Naive thymus-derived CD4-positive, alpha-beta T cell (primary cell): ENCODE measurements at regions of chr17 and their contacts with region 1.

Region 1: DNA sequence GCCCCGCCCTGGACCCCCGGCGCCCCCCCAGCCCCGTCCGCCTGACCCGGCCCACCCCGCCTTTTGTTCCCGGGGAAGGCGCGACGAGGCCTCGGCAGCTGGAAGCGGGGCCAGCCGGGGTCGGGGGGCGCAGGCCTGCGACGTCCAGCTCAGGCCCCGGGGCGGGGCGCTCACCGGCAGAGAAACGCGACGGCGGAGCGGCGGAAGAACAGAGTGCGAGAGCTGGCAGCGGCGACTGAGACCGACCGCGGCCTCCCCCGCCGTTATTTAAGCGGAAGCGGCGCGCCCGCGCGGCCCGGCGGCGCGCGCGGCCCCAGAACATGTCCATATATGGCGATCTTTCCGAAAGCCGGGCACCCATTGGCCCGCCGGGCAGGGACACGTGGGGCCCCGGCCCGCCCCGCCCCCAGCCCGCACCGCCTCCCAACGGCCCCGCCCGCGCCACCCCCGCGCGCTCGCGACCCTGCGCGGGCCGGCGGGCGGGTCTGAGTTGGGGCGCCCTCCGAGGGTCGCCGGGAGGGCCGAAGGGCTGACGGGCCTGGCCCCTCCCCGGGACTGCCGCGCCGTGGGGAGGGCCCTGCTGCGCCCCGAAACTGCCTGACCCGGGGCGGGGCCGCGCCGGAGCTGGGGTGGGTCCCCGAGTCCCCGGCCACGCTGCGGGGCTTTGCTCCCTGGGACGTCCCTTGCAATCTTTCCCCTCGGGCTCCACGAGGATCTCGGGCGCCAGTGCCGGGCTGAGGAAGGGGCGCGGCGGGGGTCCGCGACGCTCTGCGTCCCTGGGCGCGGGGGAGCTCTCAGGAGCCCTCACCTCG is at the start of gene ACTG1:
- DNase-seq: peak; percentile 87 to 93 (median 92)
- ATAC-seq: peak; percentile 87
- H3K4me3 ChIP-seq: peak within 1 kb of the TSS; percentile 77
- H3K4me3 Mint-ChIP-seq: peak within 1 kb of the TSS; percentile 91 to 100 (median 98)
- H3K27ac ChIP-seq: peak within 1 kb of the TSS; percentile 79
- H3K27ac Mint-ChIP-seq: peak within 1 kb of the TSS; percentile 92 to 99 (median 95)
- H3K4me1 ChIP-seq: peaks cover 12 to 31% of the 10 kb centered on the region in 2 donors
- H3K4me1 Mint-ChIP-seq: peaks cover 23 to 53% (median 47%) of the 10 kb centered on the region in 7 donors
- H3K27me3 ChIP-seq: no peaks in the 10 kb centered on the region
- H3K27me3 Mint-ChIP-seq: peaks cover 0 to 7% (median 0%) of the 10 kb centered on the region in 5 donors
- total RNA-seq, gene ACTG1: 971 to 4,639 (median 1,185) TPM

Region 2: GRCh38 chr17:81346090-81346907 is 166.5 kb before region 1 on chr17:
- CTCF ChIA-PET with region 1: no interaction called
- POLR2A ChIA-PET with region 1: no interaction called
- intact Hi-C with region 1: loop called in 1 of 2 experiments (anchors 2 kb)
- DNase-seq: peak; percentile 88 to 94 (median 92)
- ATAC-seq: peak; percentile 97
- H3K4me3 ChIP-seq: peak overlapping the region; percentile 44
- H3K4me3 Mint-ChIP-seq: peak overlapping the region; percentile 16 to 74 (median 58)
- H3K27ac ChIP-seq: no peak overlapping the region
- H3K27ac Mint-ChIP-seq: no peak overlapping the region
- H3K4me1 ChIP-seq: peaks cover 17 to 31% of the 10 kb centered on the region in 2 donors
- H3K4me1 Mint-ChIP-seq: peaks cover 10 to 29% (median 16%) of the 10 kb centered on the region in 7 donors
- H3K27me3 ChIP-seq: peaks cover 3 to 32% of the 10 kb centered on the region in 2 donors
- H3K27me3 Mint-ChIP-seq: peaks cover 26 to 57% (median 32%) of the 10 kb centered on the region in 5 donors

Region 3: DNA sequence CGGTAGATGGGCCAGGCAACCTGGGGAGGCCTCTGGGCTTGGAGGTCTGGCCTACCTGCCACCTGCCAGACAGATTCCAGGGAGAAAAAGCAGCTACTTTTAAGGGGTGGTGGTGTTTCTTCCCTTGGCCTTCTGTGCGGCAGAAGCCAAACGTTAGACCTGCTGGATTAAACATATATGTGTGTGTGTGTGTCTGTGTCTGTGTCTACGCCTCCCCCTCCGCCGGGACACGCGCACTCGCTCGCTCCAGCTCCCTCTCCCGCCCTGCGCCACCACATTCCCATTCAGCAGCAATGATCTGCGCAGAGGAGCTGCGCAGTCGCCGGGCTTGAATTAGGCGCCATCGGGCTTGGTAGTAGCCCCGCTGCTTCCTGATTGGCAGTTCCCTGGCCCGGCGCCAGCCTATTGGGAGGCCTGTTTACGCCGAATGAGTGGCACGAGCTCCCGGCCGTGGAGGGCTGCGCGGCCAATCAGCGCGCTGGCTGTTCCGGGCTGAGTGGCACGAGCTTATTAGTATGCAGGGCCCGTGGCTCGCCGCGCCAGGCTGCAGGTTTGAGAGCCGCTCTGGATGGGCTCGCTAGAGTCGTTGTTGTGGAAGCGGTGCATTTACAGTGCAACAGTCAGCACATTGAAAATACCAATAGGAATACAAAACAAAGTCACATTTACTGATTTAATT is 117.7 kb before region 1 on chr17 and contains the start of gene BAHCC1:
- CTCF ChIA-PET with region 1: no interaction called
- POLR2A ChIA-PET with region 1: interaction called, 5 read pairs
- intact Hi-C with region 1: loop called (anchors 5 kb)
- DNase-seq: peak; percentile 47 to 68 (median 63)
- ATAC-seq: peak; percentile 82
- H3K4me3 ChIP-seq: no peak within 1 kb of the TSS
- H3K4me3 Mint-ChIP-seq: peak within 1 kb of the TSS; percentile 47 to 69 (median 59)
- H3K27ac ChIP-seq: no peak within 1 kb of the TSS
- H3K27ac Mint-ChIP-seq: peak within 1 kb of the TSS in 7 of 9 donors; percentile 17 to 84 (median 54)
- H3K4me1 ChIP-seq: peaks cover 46% of the 10 kb centered on the region in 2 donors
- H3K4me1 Mint-ChIP-seq: peaks cover 0 to 48% (median 21%) of the 10 kb centered on the region in 7 donors
- H3K27me3 ChIP-seq: peaks cover 28 to 64% of the 10 kb centered on the region in 2 donors
- H3K27me3 Mint-ChIP-seq: peaks cover 31 to 66% (median 46%) of the 10 kb centered on the region in 5 donors
- total RNA-seq, gene BAHCC1: 0.05 to 3.8 (median 0.68) TPM in 4 of 5 experiments, not detected in the other

Region 4: DNA sequence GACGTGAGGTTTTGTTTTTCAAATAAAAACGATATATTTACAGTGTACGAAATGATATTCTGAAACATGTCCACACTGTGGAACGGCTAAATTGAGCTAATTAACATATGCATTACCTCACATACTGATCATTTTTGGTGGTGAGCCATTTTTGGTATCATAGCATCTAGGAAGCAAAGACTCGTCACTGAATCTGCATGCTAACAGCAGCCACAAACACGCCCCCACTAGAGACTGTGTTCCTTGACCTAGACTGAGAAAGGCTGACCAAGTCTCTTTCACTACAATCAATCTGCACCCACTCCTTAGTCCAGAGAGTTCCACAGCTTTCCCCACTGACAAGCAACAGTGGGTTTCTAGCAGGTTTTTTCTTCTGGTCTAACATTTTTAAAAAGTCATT is 94.7 kb after region 1 on chr17:
- CTCF ChIA-PET with region 1: no interaction called
- POLR2A ChIA-PET with region 1: no interaction called
- intact Hi-C with region 1: no loop called
- DNase-seq: no peak
- ATAC-seq: no peak
- H3K4me3 ChIP-seq: no peak overlapping the region
- H3K4me3 Mint-ChIP-seq: no peak overlapping the region
- H3K27ac ChIP-seq: no peak overlapping the region
- H3K27ac Mint-ChIP-seq: no peak overlapping the region
- H3K4me1 ChIP-seq: no peaks in the 10 kb centered on the region
- H3K4me1 Mint-ChIP-seq: peaks cover 0 to 3% (median 0%) of the 10 kb centered on the region in 7 donors
- H3K27me3 ChIP-seq: no peaks in the 10 kb centered on the region
- H3K27me3 Mint-ChIP-seq: no peaks in the 10 kb centered on the region

Region 5: DNA sequence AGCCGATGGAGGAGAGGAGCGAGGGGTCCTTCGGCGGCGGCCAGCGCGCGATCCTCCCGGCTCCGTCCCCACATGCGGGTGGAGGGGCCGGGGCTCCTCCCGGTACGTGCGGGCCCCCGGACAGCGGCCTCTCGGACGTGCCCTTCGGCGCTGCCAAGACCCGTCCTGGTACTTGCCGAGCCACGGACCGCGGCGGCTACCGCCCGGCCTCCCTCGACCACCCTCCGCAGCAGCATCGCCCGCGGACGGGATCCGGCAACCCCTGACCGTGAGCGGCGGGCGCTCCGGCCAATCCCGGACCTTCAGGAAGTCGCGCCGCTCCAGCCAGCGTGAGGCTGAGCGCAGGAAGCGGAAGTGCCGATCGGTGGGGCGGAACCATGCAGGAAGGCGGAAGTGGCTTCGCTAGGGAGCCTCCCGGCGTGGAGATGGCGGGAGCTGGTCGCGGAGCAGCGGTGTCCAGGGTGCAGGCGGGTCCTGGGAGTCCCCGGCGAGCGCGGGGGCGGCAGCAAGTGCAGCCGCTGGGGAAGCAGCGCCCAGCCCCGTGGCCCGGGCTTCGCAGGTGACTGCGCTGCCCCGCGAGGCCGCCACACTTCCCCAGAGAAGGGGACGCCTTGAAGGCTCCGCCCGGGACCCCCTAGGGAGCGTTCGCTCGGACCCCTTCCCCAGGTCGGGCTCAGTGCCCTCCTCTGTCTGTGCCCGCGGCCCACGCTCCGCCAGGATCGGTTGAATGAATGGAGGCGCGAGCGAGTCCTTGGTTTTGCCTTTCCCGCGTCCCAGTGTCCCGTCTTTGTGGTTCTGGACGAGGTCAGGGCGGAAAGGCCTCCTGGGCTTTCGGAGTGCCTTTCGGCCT is 153.8 kb after region 1 on chr17 and contains the starts of genes CCDC137 and OXLD1:
- CTCF ChIA-PET with region 1: interaction called, 3 read pairs
- POLR2A ChIA-PET with region 1: interaction called, 4 read pairs
- intact Hi-C with region 1: loop called in 1 of 2 experiments (anchors 5 kb)
- DNase-seq: peak; percentile 82 to 93 (median 89)
- ATAC-seq: peak; percentile 94
- H3K4me3 ChIP-seq: peak within 1 kb of the TSS; percentile 86
- H3K4me3 Mint-ChIP-seq: peak within 1 kb of the TSS; percentile 88 to 99 (median 94)
- H3K27ac ChIP-seq: peak within 1 kb of the TSS; percentile 93
- H3K27ac Mint-ChIP-seq: peak within 1 kb of the TSS; percentile 84 to 97 (median 92)
- H3K4me1 ChIP-seq: peaks cover 35 to 50% of the 10 kb centered on the region in 2 donors
- H3K4me1 Mint-ChIP-seq: peaks cover 17 to 62% (median 43%) of the 10 kb centered on the region in 7 donors
- H3K27me3 ChIP-seq: no peaks in the 10 kb centered on the region
- H3K27me3 Mint-ChIP-seq: no peaks in the 10 kb centered on the region
- total RNA-seq, gene CCDC137: 16.3 to 33.5 (median 27.1) TPM
- total RNA-seq, gene OXLD1: 35.9 to 61.9 (median 47.5) TPM